ENCODE measurements at regions of chr21 and their contacts with region 1.

Region 1: DNA sequence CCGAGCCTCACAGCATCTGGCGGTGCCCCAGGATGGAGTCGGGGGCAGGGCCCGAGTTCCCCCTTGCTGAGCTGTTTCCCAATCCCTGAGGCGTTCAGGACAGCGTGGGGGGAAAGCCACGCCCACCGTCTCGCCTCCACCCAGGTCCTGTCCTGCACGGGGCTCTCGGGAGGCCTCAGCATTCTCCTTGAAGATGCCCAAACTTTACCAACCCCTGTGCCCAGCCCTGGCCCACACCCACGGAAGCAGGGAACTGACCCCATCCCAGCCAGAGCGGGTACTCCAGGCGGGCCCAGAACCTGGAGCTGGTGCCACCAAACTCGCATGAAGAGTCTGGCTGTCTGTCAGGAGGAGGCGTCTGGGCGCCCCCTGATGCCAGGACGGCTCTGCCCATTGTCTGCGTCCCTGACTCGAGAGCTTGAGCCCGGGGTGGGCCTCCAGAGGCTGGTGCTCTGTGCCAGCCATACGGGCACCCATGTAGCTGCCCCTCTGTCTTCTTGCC is 35.3 kb upstream of the POFUT2 start:
- DNase-seq: no peak
- H3K4me3 ChIP-seq: no peak overlapping the region
- H3K27ac ChIP-seq: peak overlapping the region in 1 of 2 experiments; percentile 32; a peak in 1 of 4 replicates
- H3K4me1 ChIP-seq: peaks cover 21 to 28% of the 10 kb centered on the region in 2 experiments; a peak in 3 of 4 replicates
- H3K27me3 ChIP-seq: no peaks in the 10 kb centered on the region
- CTCF ChIP-seq: no peak
- EP300 ChIP-seq: no peak
- RAD21 ChIP-seq: no peak

Region 2: DNA sequence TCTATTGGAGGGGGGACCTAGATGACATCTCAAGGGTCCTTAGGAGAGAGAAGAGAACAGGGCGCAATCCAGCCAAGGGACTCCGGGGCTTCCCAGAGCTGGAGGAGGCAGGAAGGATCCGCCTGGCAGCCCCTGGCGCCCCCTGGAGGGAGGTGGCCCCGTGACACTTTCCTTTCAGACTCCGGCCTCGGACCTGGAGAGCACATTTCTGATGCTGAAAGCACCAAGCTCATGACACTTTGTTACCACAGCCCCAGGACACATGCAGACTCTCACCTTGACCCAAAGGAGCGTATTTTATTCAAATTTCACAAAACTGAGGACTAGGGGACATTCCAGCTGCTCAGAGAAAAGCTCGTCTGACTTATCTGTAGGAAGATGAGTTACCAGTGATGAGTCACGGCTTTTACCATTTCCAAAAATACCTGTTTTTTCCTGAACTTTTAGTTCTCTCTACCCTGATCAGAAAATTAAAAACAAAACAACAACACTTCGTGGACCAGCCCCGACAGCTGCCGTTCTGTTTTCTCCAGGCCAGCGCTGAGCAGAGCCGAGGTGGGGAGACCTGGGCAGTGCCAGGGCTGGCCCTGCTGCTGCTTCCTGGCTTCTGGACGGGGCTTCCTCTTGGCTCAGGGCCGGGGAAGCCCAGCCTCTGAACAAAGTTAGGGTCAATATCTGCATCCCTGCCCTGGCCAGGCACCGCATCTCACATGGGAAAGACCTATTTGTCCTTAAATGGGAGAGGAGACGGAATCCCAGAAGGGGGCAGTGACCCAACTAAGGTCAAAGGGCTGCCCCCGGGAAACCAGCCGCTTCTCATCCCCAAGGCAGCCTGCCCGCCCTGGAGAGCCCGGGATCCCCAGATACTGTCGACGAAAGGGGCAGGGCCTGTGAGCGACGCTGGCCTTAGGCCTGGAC is 13.7 kb before region 1 on chr21:
- CTCF ChIA-PET with region 1: interaction called, 15 read pairs
- POLR2A ChIA-PET with region 1: no interaction called
- DNase-seq: peak; percentile 82
- H3K4me3 ChIP-seq: no peak overlapping the region; a peak in 1 of 4 replicates
- H3K27ac ChIP-seq: peak overlapping the region; percentile 17 to 86; a peak in 2 of 4 replicates
- H3K4me1 ChIP-seq: peaks cover 3 to 16% of the 10 kb centered on the region in 2 experiments; a peak in 2 of 4 replicates
- H3K27me3 ChIP-seq: no peaks in the 10 kb centered on the region
- CTCF ChIP-seq: peak; percentile 87
- EP300 ChIP-seq: no peak
- RAD21 ChIP-seq: peak; percentile 58

Region 3: DNA sequence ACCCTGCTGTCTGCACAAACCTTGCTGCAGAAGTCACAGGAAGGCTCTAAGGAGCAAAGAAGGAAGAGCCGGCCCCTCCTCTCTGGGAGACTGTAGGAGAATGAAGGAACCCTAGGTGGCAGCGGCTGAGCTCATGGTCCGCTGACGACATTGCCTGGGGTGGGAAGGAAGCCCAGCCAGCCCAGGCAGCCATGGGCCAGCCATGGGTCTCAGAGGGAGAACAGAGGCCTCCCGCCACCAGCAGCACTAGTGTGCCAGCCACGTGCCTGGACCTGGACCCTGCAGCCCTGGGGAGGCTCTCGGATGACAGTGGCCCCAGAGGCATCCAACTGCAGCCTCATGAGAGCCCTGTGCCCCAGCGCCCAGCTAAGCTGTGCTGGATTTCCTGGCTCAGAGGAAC is 13.9 kb after region 1 on chr21:
- CTCF ChIA-PET with region 1: no interaction called
- POLR2A ChIA-PET with region 1: no interaction called
- DNase-seq: no peak
- H3K4me3 ChIP-seq: no peak overlapping the region
- H3K27ac ChIP-seq: no peak overlapping the region
- H3K4me1 ChIP-seq: peaks cover 0 to 2% of the 10 kb centered on the region in 2 experiments; a peak in 1 of 4 replicates
- H3K27me3 ChIP-seq: no peaks in the 10 kb centered on the region
- CTCF ChIP-seq: no peak
- EP300 ChIP-seq: no peak
- RAD21 ChIP-seq: 0 out of 2 replicates have a peak, but pooled peaks have one; percentile 22

Measured in SK-N-SH (cell line).